ENCODE measurements at regions of chr4 and their contacts with region 1.

Region 1: DNA sequence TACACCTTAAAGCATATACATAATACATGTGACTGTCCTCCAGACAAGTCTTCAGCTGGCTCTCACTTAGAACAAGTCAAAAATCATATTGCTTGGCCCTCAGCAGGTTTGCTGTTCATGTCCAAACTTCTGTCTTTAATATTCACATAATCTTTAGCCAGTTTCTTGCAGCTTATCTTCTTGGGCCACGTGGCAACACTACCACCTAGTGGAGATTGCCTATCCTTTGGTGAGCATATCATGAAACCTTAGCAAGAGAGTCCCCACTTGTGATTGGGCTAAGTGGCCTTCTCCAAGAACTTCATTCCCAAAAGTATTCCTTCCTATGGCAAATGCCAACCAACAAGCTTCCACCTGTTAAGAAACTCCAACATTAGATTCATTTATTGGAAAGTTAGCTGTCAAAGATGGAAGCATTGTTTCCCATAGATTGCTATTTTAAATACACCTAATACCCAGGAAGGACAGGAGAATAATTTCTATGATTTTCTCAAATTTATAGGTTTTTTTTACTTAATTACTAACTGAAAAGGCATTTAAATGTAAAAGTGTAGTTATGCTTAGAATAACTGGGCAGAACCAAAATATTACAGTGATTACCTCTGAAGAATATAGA is 231.9 kb upstream of the INTU start:
- DNase-seq: peak; percentile 61
- H3K4me3 ChIP-seq: no peak overlapping the region
- H3K27ac ChIP-seq: no peak overlapping the region
- H3K4me1 ChIP-seq: no peaks in the 10 kb centered on the region
- H3K27me3 ChIP-seq: peaks cover 3% of the 10 kb centered on the region
- CTCF ChIP-seq: peak; percentile 86 to 94

Region 2: DNA sequence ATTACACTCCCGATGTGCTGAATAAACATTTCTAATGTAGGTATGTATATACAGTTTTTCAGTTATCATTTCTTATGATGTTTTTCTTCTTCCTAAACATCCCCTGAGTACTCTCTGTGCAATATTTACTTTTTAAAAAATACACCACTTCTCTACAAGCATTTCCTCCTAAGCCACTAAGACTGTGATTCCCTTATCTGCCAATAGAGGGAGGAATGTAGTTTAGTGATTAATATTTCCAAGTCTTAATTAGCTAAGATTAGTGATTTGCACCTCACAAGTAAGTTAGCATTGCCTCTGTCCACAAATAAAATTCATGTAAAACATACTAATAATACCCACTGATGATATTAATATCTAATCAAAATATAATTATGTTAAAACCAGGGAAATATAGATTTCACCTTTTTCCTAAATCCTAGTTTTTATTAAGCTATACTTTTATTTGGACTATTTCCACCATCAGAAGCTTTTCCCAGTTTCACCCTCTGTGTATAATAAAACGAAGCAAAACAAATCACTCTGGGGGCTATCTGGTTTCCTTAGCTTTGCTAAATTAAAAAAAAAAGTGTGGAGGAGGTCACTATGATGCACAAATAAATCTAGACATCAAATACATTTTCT is 1176.9 kb before region 1 on chr4:
- CTCF ChIA-PET with region 1: interaction called, 4 read pairs
- dilution Hi-C with region 1: no loop called
- in situ Hi-C with region 1: no loop called
- intact Hi-C with region 1: loop called (anchors 2 kb)
- DNase-seq: peak; percentile 2
- H3K4me3 ChIP-seq: no peak overlapping the region
- H3K27ac ChIP-seq: no peak overlapping the region
- H3K4me1 ChIP-seq: no peaks in the 10 kb centered on the region
- H3K27me3 ChIP-seq: no peaks in the 10 kb centered on the region
- CTCF ChIP-seq: peak; percentile 69 to 74

Region 3: DNA sequence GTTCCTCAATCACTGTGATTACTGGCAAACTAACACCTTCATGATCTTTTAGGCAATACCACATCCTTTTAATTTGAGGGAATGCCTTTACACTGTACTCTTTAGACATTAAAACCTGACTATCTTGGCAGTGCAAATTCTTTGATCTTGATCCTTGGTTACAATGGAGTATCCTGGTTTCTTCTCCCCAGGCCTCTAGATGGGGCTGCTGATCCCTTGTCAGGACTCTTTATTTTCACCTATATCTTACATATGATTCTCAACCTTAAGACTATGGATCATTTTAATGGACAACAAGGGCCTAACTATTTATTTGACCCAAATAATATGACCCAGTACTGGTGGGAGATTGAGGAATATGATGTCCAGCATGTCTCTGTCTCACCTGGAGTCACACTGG is 773.6 kb before region 1 on chr4:
- CTCF ChIA-PET with region 1: no interaction called
- dilution Hi-C with region 1: no loop called
- in situ Hi-C with region 1: no loop called
- intact Hi-C with region 1: loop called (anchors 2 kb)
- DNase-seq: peak; percentile 12
- H3K4me3 ChIP-seq: no peak overlapping the region
- H3K27ac ChIP-seq: no peak overlapping the region
- H3K4me1 ChIP-seq: no peaks in the 10 kb centered on the region
- H3K27me3 ChIP-seq: no peaks in the 10 kb centered on the region
- CTCF ChIP-seq: peak; percentile 54 to 74

Region 4: GRCh38 chr4:126969360-126970235 is 431.2 kb before region 1 on chr4:
- CTCF ChIA-PET with region 1: no interaction called
- dilution Hi-C with region 1: no loop called
- in situ Hi-C with region 1: no loop called
- intact Hi-C with region 1: loop called (anchors 10 kb)
- DNase-seq: no peak
- H3K4me3 ChIP-seq: no peak overlapping the region
- H3K27ac ChIP-seq: no peak overlapping the region
- H3K4me1 ChIP-seq: no peaks in the 10 kb centered on the region
- H3K27me3 ChIP-seq: no peaks in the 10 kb centered on the region
- CTCF ChIP-seq: no peak

Region 5: GRCh38 chr4:127124920-127125319 is 275.9 kb before region 1 on chr4:
- CTCF ChIA-PET with region 1: no interaction called
- dilution Hi-C with region 1: no loop called
- in situ Hi-C with region 1: no loop called
- intact Hi-C with region 1: loop called (anchors 5 kb)
- DNase-seq: peak; percentile 3
- H3K4me3 ChIP-seq: no peak overlapping the region
- H3K27ac ChIP-seq: no peak overlapping the region
- H3K4me1 ChIP-seq: no peaks in the 10 kb centered on the region
- H3K27me3 ChIP-seq: no peaks in the 10 kb centered on the region
- CTCF ChIP-seq: peak; percentile 27 to 57

Region 6: GRCh38 chr4:127188856-127189255 is 212.0 kb before region 1 on chr4:
- CTCF ChIA-PET with region 1: no interaction called
- dilution Hi-C with region 1: no loop called
- in situ Hi-C with region 1: loop called in 1 of 2 experiments (anchors 10 kb)
- intact Hi-C with region 1: loop called (anchors 1 kb)
- DNase-seq: no peak
- H3K4me3 ChIP-seq: no peak overlapping the region
- H3K27ac ChIP-seq: no peak overlapping the region
- H3K4me1 ChIP-seq: no peaks in the 10 kb centered on the region
- H3K27me3 ChIP-seq: no peaks in the 10 kb centered on the region
- CTCF ChIP-seq: peak in 1 of 2 donors; percentile 35